ENCODE measurements at regions of chr3 and their contacts with region 1.

Region 1: DNA sequence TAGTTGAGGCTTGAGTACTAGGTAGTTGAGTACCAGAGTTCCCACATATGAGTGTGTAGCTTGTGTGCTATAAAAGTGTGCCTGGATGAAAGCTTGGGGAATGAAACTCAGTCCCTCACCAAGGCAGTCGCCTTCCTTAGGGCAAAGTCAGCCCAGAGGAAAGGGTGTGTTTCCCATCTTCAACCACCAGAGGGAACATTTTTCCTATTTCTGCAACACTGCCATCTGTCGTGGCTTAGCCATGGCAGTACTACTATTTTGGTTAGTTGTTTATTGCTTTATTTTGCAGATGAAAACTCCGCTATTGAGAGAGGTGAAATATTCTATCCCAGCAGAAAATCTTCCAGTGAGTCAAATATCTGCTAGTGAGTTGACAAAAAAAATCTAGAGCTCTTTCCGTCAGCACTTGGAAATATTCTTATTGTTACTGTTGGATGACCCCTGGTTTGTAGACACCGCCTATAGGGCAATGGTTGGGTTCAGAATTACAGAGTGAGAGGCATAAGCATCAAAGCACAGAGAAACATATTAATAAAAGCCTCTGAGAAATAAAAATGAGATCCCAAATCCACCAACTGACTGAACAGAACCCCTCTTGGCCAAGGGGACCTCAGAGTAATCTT is 239.9 kb downstream of the CPNE4 start:
- DNase-seq: peak in 2 of 5 donors; percentile 20 to 24
- ATAC-seq: peak in 3 of 4 donors; percentile 77 to 83 (median 80)
- H3K4me3 ChIP-seq: no peak overlapping the region
- H3K27ac ChIP-seq: no peak overlapping the region
- H3K4me1 ChIP-seq: peaks cover 0 to 34% (median 3%) of the 10 kb centered on the region in 12 donors
- H3K27me3 ChIP-seq: peaks cover 0 to 5% (median 0%) of the 10 kb centered on the region in 9 donors
- CTCF ChIP-seq: peak; percentile 67 to 90 (median 84)
- POLR2A ChIP-seq: no peak

Region 2: GRCh38 chr3:131053043-131053859 is 741.6 kb before region 1 on chr3:
- intact Hi-C with region 1: loop called in 3 of 10 experiments (anchors 10 kb)
- DNase-seq: no peak
- ATAC-seq: no peak
- H3K4me3 ChIP-seq: no peak overlapping the region
- H3K27ac ChIP-seq: no peak overlapping the region
- H3K4me1 ChIP-seq: no peaks in the 10 kb centered on the region
- H3K27me3 ChIP-seq: no peaks in the 10 kb centered on the region
- CTCF ChIP-seq: peak; percentile 22 to 70 (median 54)
- POLR2A ChIP-seq: no peak

Region 3: DNA sequence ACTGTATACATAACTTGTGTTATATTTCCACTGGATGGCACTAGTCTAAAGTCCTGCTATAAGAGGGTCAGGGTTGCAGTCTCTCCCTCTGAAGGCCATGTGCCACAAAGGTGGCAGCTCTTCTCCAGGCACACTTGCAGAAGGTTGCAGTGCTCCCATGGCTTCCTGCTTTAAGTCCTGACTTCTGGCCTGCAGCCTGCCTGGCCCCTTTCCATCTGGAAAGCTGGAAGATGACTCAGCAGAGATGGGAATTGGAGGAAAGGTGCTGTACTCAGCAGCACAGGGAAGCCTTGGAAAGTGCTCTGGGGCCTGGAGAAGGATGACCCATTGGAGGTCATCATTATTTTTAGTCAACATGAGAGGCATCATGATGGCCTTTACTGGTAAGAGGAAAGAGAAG is 251.2 kb before region 1 on chr3:
- intact Hi-C with region 1: loop called in 2 of 10 experiments (anchors 10 kb)
- DNase-seq: peak; percentile 68 to 89 (median 78)
- ATAC-seq: peak; percentile 85 to 99 (median 96)
- H3K4me3 ChIP-seq: no peak overlapping the region
- H3K27ac ChIP-seq: peak overlapping the region in 8 of 12 donors; percentile 9 to 70 (median 48)
- H3K4me1 ChIP-seq: peaks cover 0 to 12% (median 3%) of the 10 kb centered on the region in 12 donors
- H3K27me3 ChIP-seq: no peaks in the 10 kb centered on the region
- CTCF ChIP-seq: peak in 1 of 12 donors; percentile 12
- POLR2A ChIP-seq: no peak

Region 4: DNA sequence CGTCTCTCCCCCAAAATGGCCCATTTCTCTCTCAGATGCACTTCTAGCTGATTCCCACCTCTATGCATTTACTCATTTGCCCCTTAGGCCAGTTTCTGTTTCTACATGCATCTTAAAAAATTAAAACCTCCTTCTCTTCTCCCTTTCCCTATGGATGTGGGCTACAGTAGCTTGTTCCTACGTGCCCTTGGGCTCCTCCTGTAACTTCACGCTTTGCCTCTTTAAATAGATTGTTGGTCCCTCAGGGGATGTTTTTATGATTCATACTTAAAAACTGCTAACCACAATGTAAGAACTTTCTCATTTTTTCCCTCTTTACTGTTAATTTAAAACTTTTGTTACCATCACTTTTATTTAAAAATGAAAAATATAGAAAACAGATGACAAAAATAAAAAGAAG is 106.5 kb before region 1 on chr3:
- intact Hi-C with region 1: no loop called
- DNase-seq: no peak
- ATAC-seq: no peak
- H3K4me3 ChIP-seq: no peak overlapping the region
- H3K27ac ChIP-seq: no peak overlapping the region
- H3K4me1 ChIP-seq: no peaks in the 10 kb centered on the region
- H3K27me3 ChIP-seq: no peaks in the 10 kb centered on the region
- CTCF ChIP-seq: no peak
- POLR2A ChIP-seq: no peak

Region 5: GRCh38 chr3:132029182-132029902 is 234.5 kb after region 1 on chr3:
- intact Hi-C with region 1: loop called (anchors 1 to 2 kb)
- DNase-seq: peak; percentile 71 to 82 (median 78)
- ATAC-seq: peak; percentile 71 to 92 (median 90)
- H3K4me3 ChIP-seq: no peak overlapping the region
- H3K27ac ChIP-seq: no peak overlapping the region
- H3K4me1 ChIP-seq: peaks cover 0 to 8% (median under 1%) of the 10 kb centered on the region in 12 donors
- H3K27me3 ChIP-seq: peaks cover 0 to 23% (median 17%) of the 10 kb centered on the region in 9 donors
- CTCF ChIP-seq: peak; percentile 77 to 93 (median 83)
- POLR2A ChIP-seq: no peak